ENCODE measurements at regions of chr5 and their contacts with region 1.

Region 1: DNA sequence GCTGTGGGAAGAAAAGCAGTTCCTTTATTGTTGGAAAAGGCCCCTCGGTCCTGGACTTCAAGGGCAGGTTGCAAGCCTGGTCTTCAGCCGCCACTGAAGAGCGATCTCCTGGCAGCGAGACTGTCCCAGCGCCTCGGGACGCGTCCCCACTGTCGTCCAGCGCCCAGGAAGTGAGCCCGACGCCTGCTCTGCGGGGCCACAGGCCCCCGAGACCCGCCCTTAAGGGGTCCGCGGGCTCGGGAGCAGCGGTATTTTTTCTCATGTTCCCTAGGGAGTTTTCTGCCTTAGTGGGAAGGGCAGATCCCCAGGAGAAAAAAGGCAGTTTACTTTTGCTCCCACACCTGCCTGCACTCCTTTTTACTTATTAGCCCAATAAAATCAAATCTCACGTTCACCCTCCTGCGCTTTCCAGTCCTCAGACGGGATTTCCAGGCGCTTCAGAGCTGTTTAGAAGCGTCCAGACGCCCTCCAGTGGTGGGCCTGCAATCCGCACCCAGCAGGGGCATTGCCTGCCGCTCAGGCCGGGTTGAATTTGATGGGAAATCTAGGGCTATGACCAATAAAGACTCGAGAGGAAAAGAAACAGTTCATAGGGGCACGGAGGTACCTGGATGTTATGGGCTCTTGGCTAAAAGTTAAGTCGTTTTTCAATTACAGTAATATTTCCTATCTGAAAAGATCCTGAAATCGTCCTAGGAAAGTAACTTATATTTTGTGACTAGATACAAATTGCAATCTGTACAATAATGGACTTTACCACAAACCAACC is 2.8 kb upstream of the EFNA5 start:
- DNase-seq: peak; percentile 95
- H3K4me3 Mint-ChIP-seq: peak overlapping the region; percentile 84
- H3K27ac Mint-ChIP-seq: peak overlapping the region; percentile 93
- H3K4me1 Mint-ChIP-seq: peaks cover 20% of the 10 kb centered on the region
- H3K27me3 Mint-ChIP-seq: no peaks in the 10 kb centered on the region
- CTCF ChIP-seq: peak; percentile 96

Region 2: DNA sequence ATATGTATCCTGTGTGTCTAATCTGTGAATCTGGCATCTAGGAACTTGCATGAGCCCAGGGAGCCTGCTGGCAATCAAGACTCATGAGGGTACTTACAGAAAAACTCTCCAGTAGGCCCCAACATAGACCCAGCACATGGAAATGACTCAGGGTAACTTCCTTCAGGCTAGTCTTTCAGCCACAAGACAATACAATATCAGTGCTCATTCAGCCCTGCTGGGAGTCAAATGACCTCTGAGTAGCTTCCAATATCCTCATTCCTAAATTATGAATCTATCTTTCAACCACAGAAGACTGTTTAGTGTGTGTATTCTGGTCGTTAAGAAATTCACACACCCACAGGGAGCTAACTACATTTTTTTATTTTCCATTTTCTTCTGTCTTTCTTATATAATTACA is 1275.9 kb before region 1 on chr5:
- CTCF ChIA-PET with region 1: no interaction called
- POLR2A ChIA-PET with region 1: no interaction called
- intact Hi-C with region 1: loop called (anchors 10 kb)
- DNase-seq: peak; percentile 71
- H3K4me3 Mint-ChIP-seq: no peak overlapping the region
- H3K27ac Mint-ChIP-seq: no peak overlapping the region
- H3K4me1 Mint-ChIP-seq: peaks cover 16% of the 10 kb centered on the region
- H3K27me3 Mint-ChIP-seq: no peaks in the 10 kb centered on the region
- CTCF ChIP-seq: no peak

Region 3: GRCh38 chr5:106907979-106908378 is 765.6 kb before region 1 on chr5:
- CTCF ChIA-PET with region 1: no interaction called
- POLR2A ChIA-PET with region 1: no interaction called
- intact Hi-C with region 1: no loop called
- DNase-seq: no peak
- H3K4me3 Mint-ChIP-seq: no peak overlapping the region
- H3K27ac Mint-ChIP-seq: no peak overlapping the region
- H3K4me1 Mint-ChIP-seq: no peaks in the 10 kb centered on the region
- H3K27me3 Mint-ChIP-seq: no peaks in the 10 kb centered on the region
- CTCF ChIP-seq: no peak

Region 4: DNA sequence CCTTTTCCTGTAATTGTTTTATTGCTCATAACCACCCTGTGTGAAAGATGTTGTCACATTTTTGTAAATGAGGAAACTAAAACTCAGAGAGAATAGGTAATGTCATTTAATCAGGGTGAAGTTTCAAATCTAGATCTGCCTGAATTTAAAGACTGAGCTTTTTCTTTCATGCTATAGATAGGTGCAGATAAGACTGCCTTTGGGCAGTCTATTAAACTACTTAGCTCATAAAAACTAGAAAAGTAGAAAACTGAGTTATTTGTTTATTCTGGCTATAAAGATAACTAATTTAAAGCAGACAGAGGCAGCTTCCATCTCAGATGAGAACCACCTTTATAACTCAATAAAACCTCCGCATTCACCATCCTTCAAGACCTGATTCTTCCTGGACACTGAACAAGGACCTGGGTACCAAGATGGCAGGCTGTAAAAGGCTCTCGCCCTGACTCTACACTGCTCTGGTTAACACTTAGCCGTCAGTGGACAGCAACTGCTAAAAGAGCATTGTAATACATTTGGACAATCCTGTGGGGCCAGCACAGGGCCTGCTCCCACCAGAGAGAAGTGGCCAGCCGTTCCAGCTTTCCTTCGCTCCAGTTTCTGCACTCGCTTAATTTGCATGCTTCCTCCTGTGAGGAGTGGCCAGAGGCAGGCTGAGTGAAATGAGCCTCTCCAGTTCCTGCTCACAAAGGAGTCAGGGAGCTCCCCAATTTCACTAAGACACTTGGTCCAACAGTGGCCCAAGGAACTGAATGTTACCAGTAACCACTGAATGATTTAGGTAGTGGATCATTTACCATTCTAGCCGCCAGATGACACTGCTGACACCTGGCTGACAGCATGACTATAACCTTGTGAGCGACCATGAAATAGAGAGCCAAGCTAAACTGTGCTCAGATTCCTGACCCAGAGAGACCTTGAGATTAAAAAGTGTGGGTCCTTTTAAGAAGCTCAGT is 569.2 kb before region 1 on chr5:
- CTCF ChIA-PET with region 1: no interaction called
- POLR2A ChIA-PET with region 1: interaction called, 3 read pairs
- intact Hi-C with region 1: loop called (anchors 5 kb)
- DNase-seq: no peak
- H3K4me3 Mint-ChIP-seq: no peak overlapping the region
- H3K27ac Mint-ChIP-seq: no peak overlapping the region
- H3K4me1 Mint-ChIP-seq: no peaks in the 10 kb centered on the region
- H3K27me3 Mint-ChIP-seq: no peaks in the 10 kb centered on the region
- CTCF ChIP-seq: no peak

Region 5: GRCh38 chr5:107381189-107381856 is 292.2 kb before region 1 on chr5:
- CTCF ChIA-PET with region 1: no interaction called
- POLR2A ChIA-PET with region 1: interaction called, 10 read pairs
- intact Hi-C with region 1: loop called (anchors 1 kb)
- DNase-seq: peak; percentile 87
- H3K4me3 Mint-ChIP-seq: peak overlapping the region; percentile 29
- H3K27ac Mint-ChIP-seq: peak overlapping the region; percentile 78
- H3K4me1 Mint-ChIP-seq: peaks cover 41% of the 10 kb centered on the region
- H3K27me3 Mint-ChIP-seq: no peaks in the 10 kb centered on the region
- CTCF ChIP-seq: no peak

Region 6: DNA sequence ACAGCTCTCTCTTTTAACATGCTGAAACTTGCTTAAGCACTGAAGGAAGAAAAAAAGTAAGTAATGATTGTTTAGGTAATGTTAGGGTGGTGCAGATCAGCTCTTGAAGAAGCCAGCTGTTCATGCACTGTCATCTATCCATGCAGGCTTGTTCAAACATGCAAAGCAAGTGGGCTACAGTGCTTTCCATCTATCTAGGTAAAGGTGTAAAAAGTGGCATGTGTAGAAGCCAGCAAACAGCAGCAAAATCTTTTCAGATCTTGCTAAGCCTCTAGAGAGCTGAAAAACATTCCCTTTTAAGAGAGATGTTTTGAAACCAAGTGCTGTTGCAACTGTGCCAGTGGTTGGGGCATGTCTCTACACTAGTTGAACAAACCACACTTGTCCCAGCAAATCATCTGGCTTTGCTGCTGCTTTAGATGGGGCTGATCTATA is 217.3 kb before region 1 on chr5:
- CTCF ChIA-PET with region 1: interaction called, 4 read pairs
- POLR2A ChIA-PET with region 1: interaction called, 28 read pairs
- intact Hi-C with region 1: no loop called
- DNase-seq: peak; percentile 76
- H3K4me3 Mint-ChIP-seq: peak overlapping the region; percentile 6
- H3K27ac Mint-ChIP-seq: peak overlapping the region; percentile 64
- H3K4me1 Mint-ChIP-seq: peaks cover 56% of the 10 kb centered on the region
- H3K27me3 Mint-ChIP-seq: no peaks in the 10 kb centered on the region
- CTCF ChIP-seq: no peak

Region 7: DNA sequence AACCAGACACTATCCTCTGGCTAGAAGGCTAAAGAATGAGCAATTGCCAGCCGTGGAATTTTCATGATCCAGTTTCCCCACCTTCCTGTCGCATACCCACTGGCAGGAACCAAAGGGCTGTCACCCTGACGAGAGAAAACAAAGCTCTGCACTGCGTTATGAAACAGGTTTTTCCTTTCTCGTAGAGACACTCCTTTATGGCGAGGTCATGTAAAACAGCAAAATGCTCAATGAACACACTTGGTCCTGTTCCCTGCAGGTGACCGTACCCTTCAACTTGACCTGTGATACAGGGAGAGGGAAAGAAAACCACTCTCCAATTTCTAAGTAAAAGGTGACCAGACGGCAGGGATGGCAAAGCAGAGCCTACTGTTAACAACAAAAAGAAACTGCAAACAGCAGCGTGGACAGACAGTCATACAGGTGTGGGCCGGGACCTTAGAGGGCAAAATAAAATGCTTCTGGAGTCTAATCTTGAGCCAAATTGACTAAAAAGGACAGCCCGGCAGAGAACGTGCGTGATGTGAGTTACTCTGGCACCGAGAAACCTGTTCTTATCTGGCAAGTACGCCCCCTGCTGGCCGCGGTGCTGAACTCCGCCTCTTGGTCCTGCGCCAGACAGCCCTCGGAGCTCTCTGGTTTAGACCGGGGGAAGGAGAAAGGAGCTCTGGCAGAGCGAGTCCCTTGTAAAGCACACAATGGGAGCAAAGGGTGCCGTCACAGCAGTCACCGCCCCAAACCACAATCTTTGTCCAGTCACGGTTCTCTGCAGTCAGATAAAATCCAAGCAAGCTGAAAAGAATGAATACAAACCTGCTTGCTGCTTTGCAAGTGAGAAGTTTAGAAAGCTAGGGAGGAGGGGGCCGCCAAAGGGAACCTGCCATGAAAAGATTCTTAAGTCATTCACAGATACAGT is 101.7 kb before region 1 on chr5:
- CTCF ChIA-PET with region 1: interaction called, 8 read pairs
- POLR2A ChIA-PET with region 1: interaction called, 205 read pairs
- intact Hi-C with region 1: loop called (anchors 1 kb)
- DNase-seq: peak; percentile 98
- H3K4me3 Mint-ChIP-seq: peak overlapping the region; percentile 65
- H3K27ac Mint-ChIP-seq: peak overlapping the region; percentile 79
- H3K4me1 Mint-ChIP-seq: peaks cover 63% of the 10 kb centered on the region
- H3K27me3 Mint-ChIP-seq: no peaks in the 10 kb centered on the region
- CTCF ChIP-seq: peak; percentile 79

Region 8: DNA sequence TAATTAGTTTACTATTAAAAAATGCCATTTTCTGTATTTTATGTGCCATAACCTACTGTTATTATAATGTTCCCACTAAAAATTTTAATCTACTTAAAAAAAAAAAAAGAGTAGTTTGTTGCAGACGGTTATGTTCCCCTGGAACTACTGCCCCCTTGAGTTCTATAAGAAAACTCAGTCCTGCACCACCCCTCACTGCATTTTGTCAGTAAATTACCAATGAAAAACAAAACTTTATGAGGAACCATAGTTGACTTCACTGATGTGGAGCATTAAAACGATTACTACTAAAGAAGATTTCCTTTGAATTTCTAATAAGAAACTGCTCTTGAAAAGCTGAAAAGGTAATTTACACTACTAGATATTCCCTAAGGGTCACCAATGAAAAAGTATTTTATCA is 419.6 kb after region 1 on chr5:
- CTCF ChIA-PET with region 1: no interaction called
- POLR2A ChIA-PET with region 1: no interaction called
- intact Hi-C with region 1: loop called (anchors 1 kb)
- DNase-seq: peak; percentile 45
- H3K4me3 Mint-ChIP-seq: no peak overlapping the region
- H3K27ac Mint-ChIP-seq: no peak overlapping the region
- H3K4me1 Mint-ChIP-seq: no peaks in the 10 kb centered on the region
- H3K27me3 Mint-ChIP-seq: no peaks in the 10 kb centered on the region
- CTCF ChIP-seq: peak; percentile 49